HCT116 (cell line): ENCODE measurements at regions of chr17 and their contacts with region 1.

Region 1: DNA sequence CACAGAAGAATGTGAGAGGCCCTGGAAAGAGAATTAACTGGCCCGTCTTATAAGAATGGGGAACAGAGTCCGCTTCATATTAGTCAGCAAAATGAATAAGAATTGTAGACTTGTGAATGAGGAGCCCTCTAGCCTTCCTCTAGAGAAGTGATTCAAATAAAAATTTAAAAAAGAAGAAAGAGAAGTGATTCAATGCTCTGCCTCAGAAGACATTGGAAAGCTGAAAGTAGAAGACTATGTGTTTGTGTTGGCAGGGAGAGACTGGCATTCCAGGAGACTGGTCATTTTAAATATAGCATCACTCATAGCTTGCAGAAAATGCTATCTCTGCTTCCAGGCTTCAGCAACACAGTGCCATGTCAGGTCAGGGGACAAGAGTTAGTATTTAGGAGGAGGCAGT is 190.6 kb upstream of the HS3ST3A1 start:
- DNase-seq: no peak
- ATAC-seq: no peak
- H3K4me3 ChIP-seq: no peak overlapping the region
- H3K27ac ChIP-seq: no peak overlapping the region
- H3K4me1 ChIP-seq: no peaks in the 10 kb centered on the region
- H3K27me3 ChIP-seq: no peaks in the 10 kb centered on the region
- CTCF ChIP-seq: no peak
- POLR2A ChIP-seq: no peak
- RAD21 ChIP-seq: no peak

Region 2: DNA sequence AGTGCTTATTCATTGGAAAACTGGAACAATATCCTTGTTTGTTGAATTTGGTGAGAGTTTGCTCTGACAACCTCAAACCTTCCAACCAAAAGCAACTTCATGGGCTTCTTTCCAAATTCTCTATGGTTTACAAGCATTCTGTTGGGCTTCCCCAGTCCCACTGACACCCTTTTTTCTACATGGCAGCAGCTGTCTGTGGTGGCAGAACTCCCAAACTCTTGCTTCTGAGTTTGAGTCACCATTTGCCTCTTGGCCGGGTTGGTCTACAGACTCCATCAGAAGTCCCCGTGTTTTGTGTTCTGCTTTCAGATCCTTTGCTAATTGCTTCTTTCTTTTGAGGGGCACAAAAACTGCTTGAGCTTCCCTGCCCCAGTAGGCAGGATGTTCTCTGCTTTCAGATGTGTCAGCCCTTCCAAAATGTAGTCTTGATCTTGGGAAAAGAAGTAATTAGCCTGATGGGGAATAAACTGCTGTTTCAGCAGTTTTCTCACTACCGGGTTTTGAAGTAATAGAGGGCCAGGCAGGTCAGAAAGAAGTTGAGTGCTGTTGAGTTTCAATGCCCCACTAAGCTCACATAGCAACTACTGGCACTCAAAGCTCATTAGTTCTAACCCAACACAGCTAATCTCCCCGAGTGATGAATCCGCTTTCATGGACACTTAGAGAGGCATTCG is 271.3 kb before region 1 on chr17:
- CTCF ChIA-PET with region 1: no interaction called
- POLR2A ChIA-PET with region 1: no interaction called
- RAD21 ChIA-PET with region 1: no interaction called
- intact Hi-C with region 1: no loop called
- DNase-seq: no peak
- ATAC-seq: no peak
- H3K4me3 ChIP-seq: no peak overlapping the region
- H3K27ac ChIP-seq: no peak overlapping the region
- H3K4me1 ChIP-seq: no peaks in the 10 kb centered on the region
- H3K27me3 ChIP-seq: no peaks in the 10 kb centered on the region
- CTCF ChIP-seq: no peak
- POLR2A ChIP-seq: no peak
- RAD21 ChIP-seq: no peak

Region 3: DNA sequence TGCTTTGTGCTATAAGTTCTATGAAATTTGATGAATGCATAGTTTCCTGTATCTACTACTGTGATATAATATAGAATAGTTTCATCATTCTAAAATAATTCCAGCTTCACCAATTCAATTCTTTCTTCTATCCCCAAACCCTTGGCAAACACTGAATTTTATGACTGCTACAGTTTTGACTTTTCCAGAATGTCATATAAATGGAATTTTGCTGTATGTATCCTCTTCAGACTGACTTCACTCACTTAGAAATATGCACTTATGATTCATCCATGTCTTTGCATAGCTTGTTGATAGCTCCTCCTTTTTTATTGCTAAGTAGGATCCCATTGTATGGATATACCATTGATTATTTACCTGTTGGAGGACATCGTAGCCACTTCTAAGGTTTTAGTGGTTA is 101.5 kb before region 1 on chr17:
- CTCF ChIA-PET with region 1: no interaction called
- POLR2A ChIA-PET with region 1: no interaction called
- RAD21 ChIA-PET with region 1: no interaction called
- intact Hi-C with region 1: no loop called
- DNase-seq: no peak
- ATAC-seq: no peak
- H3K4me3 ChIP-seq: no peak overlapping the region
- H3K27ac ChIP-seq: no peak overlapping the region
- H3K4me1 ChIP-seq: no peaks in the 10 kb centered on the region
- H3K27me3 ChIP-seq: no peaks in the 10 kb centered on the region; the same call in 1 of the 2 replicates
- CTCF ChIP-seq: no peak
- POLR2A ChIP-seq: no peak
- RAD21 ChIP-seq: no peak

Region 4: DNA sequence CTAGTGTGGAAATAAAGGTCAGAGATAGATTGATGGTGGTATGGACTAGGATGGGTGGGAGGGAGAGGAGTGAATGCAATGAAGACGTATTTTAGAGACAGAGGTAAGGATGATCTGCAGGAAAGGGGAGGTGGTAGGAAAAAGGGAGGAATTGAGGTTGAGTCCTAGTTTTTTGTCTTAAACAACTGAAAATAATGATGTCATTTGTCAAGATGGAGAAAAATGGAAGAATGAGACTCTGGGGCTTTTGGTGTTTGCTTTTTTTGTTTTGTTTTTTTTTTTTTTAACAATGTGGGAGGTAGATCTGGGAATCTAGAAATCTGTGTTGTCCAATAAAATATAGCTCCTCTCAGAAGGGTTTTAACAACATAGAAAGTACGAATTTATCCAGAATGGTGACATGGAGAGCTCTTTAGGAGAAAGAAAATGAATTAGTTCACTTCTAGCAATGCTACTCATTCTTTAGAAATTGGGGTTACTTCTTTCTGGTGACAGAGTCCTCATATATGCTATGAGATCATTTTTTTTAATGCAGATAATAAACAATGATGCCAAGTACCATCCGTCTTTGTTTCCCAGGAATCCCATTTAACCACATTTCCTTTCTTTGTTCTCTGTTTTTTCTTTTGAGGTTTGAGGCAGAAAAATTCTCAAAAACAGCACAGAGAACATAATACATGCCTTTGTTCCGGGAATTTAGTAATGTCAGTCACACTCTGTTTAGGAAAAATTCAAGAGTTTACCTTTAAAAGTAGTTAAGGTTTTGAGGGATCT is 51.7 kb after region 1 on chr17:
- CTCF ChIA-PET with region 1: no interaction called
- POLR2A ChIA-PET with region 1: no interaction called
- RAD21 ChIA-PET with region 1: no interaction called
- intact Hi-C with region 1: loop called (anchors 5 kb)
- DNase-seq: no peak
- ATAC-seq: no peak
- H3K4me3 ChIP-seq: no peak overlapping the region
- H3K27ac ChIP-seq: no peak overlapping the region
- H3K4me1 ChIP-seq: peaks cover 0 to 3% of the 10 kb centered on the region in 2 experiments; a peak in 1 of 4 replicates
- H3K27me3 ChIP-seq: peaks cover 10% of the 10 kb centered on the region; the same call in 1 of the 2 replicates
- CTCF ChIP-seq: no peak
- POLR2A ChIP-seq: no peak
- RAD21 ChIP-seq: no peak